H1 (cell line): ENCODE measurements at regions of chr1 and their contacts with region 1.

Region 1: DNA sequence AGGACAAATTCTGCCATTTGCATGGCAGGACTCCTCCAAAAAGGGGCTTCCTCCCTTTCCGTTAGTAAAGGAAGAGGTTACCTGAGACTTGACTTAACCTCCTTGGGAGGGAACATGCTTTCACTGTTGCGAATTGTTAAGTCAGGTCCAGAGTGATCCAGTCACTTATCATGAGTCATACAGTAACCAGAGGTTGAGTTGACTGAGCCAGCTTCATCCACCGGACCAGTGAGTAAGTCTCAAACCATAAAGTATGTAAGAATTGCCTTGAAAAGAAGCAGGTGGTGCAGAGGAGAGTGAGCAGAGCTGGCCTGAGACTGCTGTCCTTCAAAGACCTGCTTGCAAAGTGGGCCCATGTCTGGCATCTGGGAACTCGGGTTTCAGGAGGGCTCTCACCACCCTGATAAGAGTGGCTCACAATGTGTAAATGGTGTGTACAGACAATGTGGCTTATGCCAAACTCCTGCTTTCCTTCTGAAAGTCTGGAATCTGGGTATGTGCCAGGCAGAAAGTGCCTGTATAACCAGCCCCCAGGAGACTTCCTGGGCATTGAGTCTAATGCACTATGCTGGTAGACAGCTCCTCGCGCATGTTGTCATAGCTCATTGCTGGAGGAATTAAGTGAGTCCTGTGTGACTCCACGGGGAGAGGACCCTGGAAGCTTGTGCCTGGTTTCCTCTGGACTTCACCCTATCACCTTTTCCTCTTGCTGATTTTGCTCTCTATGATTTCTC is 84.3 kb upstream of the KLHDC7A start:
- DNase-seq: no peak
- H3K4me3 ChIP-seq: no peak overlapping the region
- H3K27ac ChIP-seq: no peak overlapping the region
- H3K4me1 ChIP-seq: peaks cover 0 to 7% (median 3%) of the 10 kb centered on the region in 4 experiments; a peak in 3 of 7 replicates
- H3K27me3 ChIP-seq: no peaks in the 10 kb centered on the region; a peak in 3 of 7 replicates
- CTCF ChIP-seq: no peak
- EP300 ChIP-seq: no peak
- POLR2A ChIP-seq: no peak
- RAD21 ChIP-seq: no peak

Region 2: DNA sequence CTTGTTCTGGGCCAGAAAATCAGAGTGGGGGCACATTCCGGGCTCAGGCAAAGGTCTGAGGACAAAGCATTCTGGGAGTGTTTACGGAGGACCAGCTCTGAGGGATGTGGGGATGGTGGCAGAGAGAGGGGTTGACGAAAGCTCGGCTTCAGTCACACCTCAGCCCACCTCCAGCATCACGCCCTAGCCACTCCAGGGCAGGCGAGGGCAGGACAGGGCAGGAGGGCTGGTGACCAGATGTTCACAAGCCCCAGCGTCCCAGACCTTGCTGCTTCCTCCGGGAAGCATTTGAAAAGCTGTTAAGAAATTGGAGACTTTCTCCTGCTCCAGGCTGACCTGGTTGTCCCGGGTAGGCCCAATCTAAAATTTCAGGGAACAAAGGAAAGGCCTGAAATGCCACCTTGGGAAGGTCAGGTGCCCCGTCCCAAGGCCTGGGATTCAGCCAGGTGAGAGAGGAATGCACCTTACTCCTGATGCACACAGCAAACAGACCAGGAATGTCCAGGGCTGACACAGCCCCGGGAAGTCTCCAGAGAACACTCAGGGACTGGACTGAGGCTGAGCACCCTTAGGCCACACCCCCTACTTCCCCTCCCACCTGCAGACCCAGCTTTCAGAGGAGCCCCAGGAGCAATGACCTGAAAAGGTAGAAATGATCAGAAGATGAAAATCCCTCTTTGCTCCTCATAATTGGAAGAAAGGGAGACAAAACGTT is 12.4 kb after region 1 on chr1:
- CTCF ChIA-PET with region 1: interaction called, 15 read pairs
- POLR2A ChIA-PET with region 1: interaction called, 4 read pairs
- DNase-seq: no peak
- H3K4me3 ChIP-seq: no peak overlapping the region
- H3K27ac ChIP-seq: no peak overlapping the region
- H3K4me1 ChIP-seq: peaks cover 9 to 43% (median 18%) of the 10 kb centered on the region in 4 experiments
- H3K27me3 ChIP-seq: no peaks in the 10 kb centered on the region; a peak in 1 of 7 replicates
- CTCF ChIP-seq: no peak
- EP300 ChIP-seq: no peak
- POLR2A ChIP-seq: no peak
- RAD21 ChIP-seq: no peak

Region 3: DNA sequence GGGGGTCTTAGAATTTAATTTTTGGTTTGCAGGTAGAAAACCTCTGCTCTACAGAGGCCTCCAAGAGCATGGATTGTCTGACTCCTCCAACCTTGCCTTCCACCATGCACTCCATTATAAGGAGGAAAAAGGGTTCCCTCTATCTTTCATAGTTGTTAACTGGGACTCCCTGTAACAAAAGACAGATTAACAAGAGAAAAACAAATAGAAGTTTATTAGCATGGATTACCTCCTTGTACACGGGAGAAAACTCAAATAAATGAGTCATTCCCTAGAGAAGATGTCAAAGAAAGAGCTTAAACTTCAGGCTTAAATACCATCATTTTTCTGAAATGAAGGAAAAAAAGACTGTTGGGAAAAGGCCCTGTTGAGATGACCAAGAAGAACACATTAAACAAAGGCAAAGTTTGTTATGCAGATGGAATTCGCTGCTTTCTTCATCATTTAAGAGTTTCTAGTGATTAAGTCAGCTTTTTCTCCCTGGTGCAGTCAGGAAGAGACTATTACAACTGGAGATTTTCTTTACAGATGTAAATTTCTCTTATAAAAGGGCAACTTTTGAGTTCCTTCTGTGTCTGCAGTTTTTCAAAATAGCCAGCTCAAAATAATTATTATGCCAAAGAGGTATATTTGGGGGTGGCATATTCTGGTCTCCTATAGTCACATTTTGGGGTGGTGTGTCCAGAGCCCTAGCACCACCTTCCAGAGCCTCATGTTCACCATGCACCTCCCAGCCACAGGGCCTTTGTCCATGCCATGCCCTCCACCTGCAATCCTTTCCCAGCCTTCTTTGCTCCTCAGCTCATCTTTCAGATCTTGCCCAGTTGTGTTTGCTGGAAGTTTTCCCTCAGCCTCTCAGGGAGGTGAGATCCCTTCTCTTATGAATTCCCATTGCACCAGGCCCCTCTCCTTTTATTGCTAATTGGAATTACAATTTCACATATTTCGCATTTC is 21.2 kb after region 1 on chr1:
- CTCF ChIA-PET with region 1: interaction called, 11 read pairs
- POLR2A ChIA-PET with region 1: interaction called, 4 read pairs
- DNase-seq: no peak
- H3K4me3 ChIP-seq: no peak overlapping the region
- H3K27ac ChIP-seq: no peak overlapping the region
- H3K4me1 ChIP-seq: peaks cover 8 to 22% (median 14%) of the 10 kb centered on the region in 4 experiments
- H3K27me3 ChIP-seq: no peaks in the 10 kb centered on the region
- CTCF ChIP-seq: no peak
- EP300 ChIP-seq: no peak
- POLR2A ChIP-seq: no peak
- RAD21 ChIP-seq: no peak

Region 4: GRCh38 chr1:18470671-18471355 is 74.4 kb after region 1 on chr1:
- CTCF ChIA-PET with region 1: interaction called, 20 read pairs
- POLR2A ChIA-PET with region 1: no interaction called
- DNase-seq: no peak
- H3K4me3 ChIP-seq: no peak overlapping the region
- H3K27ac ChIP-seq: no peak overlapping the region
- H3K4me1 ChIP-seq: peaks cover 0 to 1% (median 0%) of the 10 kb centered on the region in 4 experiments; a peak in 3 of 7 replicates
- H3K27me3 ChIP-seq: no peaks in the 10 kb centered on the region
- CTCF ChIP-seq: no peak
- EP300 ChIP-seq: no peak
- POLR2A ChIP-seq: no peak
- RAD21 ChIP-seq: no peak

Region 5: GRCh38 chr1:18486195-18486594 is 89.8 kb after region 1 on chr1:
- CTCF ChIA-PET with region 1: interaction called, 25 read pairs
- POLR2A ChIA-PET with region 1: interaction called, 3 read pairs
- DNase-seq: peak; percentile 19 to 74
- H3K4me3 ChIP-seq: no peak overlapping the region
- H3K27ac ChIP-seq: no peak overlapping the region
- H3K4me1 ChIP-seq: peaks cover 0 to 18% (median 8%) of the 10 kb centered on the region in 4 experiments; a peak in 6 of 7 replicates
- H3K27me3 ChIP-seq: no peaks in the 10 kb centered on the region
- CTCF ChIP-seq: peak; percentile 74 to 97 (median 79)
- EP300 ChIP-seq: no peak
- POLR2A ChIP-seq: peak in 1 of 2 experiments; percentile 26; a peak in 1 of 3 replicates
- RAD21 ChIP-seq: peak; percentile 68 to 83

Region 6: GRCh38 chr1:18575620-18576019 is 179.2 kb after region 1 on chr1:
- CTCF ChIA-PET with region 1: interaction called, 13 read pairs
- POLR2A ChIA-PET with region 1: no interaction called
- DNase-seq: peak; percentile 86 to 99
- H3K4me3 ChIP-seq: no peak overlapping the region
- H3K27ac ChIP-seq: no peak overlapping the region
- H3K4me1 ChIP-seq: no peaks in the 10 kb centered on the region; a peak in 1 of 7 replicates
- H3K27me3 ChIP-seq: no peaks in the 10 kb centered on the region; a peak in 1 of 7 replicates
- CTCF ChIP-seq: peak; percentile 84 to 96 (median 94)
- EP300 ChIP-seq: no peak
- POLR2A ChIP-seq: no peak
- RAD21 ChIP-seq: peak; percentile 98 to 99